ENCODE measurements at regions of chr11 and their contacts with region 1.

Region 1: DNA sequence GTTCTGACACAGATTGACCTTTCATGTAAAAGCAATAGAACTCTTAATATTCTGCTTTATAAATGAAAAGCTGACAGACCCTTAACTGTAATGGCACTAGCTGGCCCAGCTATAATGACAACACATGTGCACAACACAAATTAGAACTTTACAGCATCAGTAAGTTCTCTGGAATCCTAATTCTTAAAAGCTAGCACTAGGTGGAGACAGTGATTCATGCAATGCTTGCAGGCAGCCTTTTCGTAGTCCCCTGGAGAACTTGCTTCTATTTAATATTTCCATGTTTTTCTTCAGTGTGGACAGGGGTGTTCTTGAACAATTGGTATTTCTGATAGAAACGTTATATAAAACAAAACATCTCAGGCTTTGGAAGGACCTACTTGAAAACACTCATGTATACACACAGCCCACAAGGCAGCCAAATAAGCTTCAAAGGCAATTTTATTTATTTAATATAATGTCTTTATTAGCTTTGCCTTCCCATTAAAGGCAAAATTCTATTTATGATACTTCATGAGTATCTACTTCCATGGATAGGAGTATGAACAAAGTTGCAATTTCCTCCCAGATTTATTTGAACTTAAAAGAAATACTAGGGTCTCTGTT is 374.3 kb upstream of the MPPED2 start:
- DNase-seq: peak in 3 of 7 donors; percentile 19 to 28 (median 19)
- H3K4me3 ChIP-seq: no peak overlapping the region
- H3K27ac ChIP-seq: no peak overlapping the region
- H3K4me1 ChIP-seq: no peaks in the 10 kb centered on the region
- H3K27me3 ChIP-seq: no peaks in the 10 kb centered on the region
- CTCF ChIP-seq: peak; percentile 50 to 69 (median 66)
- POLR2A ChIP-seq: no peak

Region 2: GRCh38 chr11:31045335-31045734 is 84.8 kb after region 1 on chr11:
- intact Hi-C with region 1: loop called (anchors 5 to 10 kb)
- DNase-seq: no peak
- H3K4me3 ChIP-seq: no peak overlapping the region
- H3K27ac ChIP-seq: no peak overlapping the region
- H3K4me1 ChIP-seq: no peaks in the 10 kb centered on the region
- H3K27me3 ChIP-seq: no peaks in the 10 kb centered on the region
- CTCF ChIP-seq: peak; percentile 32 to 53 (median 48)
- POLR2A ChIP-seq: no peak

Measured in adrenal gland (tissue), 19 donors.